SK-N-SH (cell line): ENCODE measurements at regions of chr9 and their contacts with region 1.

Region 1: DNA sequence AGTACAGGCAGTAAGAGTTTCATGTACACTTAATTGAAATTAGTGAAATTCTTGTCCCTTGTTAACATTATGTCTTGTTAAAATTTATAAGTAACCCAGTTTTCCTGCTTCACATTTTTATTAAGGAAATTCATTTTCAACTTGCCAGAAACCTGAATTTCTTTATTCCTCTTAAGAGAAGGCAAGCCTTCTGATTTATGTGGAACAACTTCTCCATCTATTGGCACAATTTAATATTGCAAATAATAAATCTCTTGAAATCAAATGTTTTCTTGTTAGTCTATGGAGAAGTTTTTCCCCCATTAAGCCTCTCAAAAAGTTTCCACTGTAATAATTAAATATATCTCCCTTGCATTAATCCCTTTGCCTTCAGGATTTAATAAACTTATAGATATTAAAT is 33.8 kb upstream of the ACO1 start:
- DNase-seq: no peak
- H3K4me3 ChIP-seq: no peak overlapping the region
- H3K27ac ChIP-seq: no peak overlapping the region
- H3K4me1 ChIP-seq: no peaks in the 10 kb centered on the region
- H3K27me3 ChIP-seq: no peaks in the 10 kb centered on the region
- CTCF ChIP-seq: peak; percentile 62
- EP300 ChIP-seq: no peak
- RAD21 ChIP-seq: peak; percentile 82

Region 2: DNA sequence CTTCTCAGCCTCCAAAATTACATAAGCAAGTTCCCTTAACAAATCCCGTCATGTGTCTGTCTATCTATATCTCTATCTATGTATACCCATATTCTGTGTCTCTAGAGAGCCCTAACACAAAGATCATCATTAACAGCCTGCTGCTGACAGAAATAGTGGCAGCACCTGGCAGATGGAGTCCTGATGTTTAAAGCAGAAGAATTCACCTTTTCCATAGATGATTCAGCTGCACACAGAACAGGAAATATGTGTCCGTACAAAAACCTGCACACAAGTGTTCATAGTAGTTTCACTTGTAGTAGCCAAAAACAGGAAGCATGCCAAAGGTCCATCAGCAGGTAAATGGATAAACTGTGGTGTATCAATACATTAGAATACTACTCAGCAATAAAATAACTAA is 11.3 kb before region 1 on chr9:
- CTCF ChIA-PET with region 1: interaction called, 29 read pairs
- POLR2A ChIA-PET with region 1: no interaction called
- DNase-seq: no peak
- H3K4me3 ChIP-seq: no peak overlapping the region
- H3K27ac ChIP-seq: no peak overlapping the region
- H3K4me1 ChIP-seq: peaks cover 0 to 4% of the 10 kb centered on the region in 2 experiments; a peak in 1 of 4 replicates
- H3K27me3 ChIP-seq: no peaks in the 10 kb centered on the region
- CTCF ChIP-seq: no peak
- EP300 ChIP-seq: no peak
- RAD21 ChIP-seq: no peak

Region 3: GRCh38 chr9:32442433-32442832 is 91.8 kb after region 1 on chr9:
- CTCF ChIA-PET with region 1: no interaction called
- POLR2A ChIA-PET with region 1: no interaction called
- DNase-seq: no peak
- H3K4me3 ChIP-seq: no peak overlapping the region
- H3K27ac ChIP-seq: no peak overlapping the region
- H3K4me1 ChIP-seq: no peaks in the 10 kb centered on the region
- H3K27me3 ChIP-seq: no peaks in the 10 kb centered on the region
- CTCF ChIP-seq: no peak
- EP300 ChIP-seq: no peak
- RAD21 ChIP-seq: no peak

Region 4: DNA sequence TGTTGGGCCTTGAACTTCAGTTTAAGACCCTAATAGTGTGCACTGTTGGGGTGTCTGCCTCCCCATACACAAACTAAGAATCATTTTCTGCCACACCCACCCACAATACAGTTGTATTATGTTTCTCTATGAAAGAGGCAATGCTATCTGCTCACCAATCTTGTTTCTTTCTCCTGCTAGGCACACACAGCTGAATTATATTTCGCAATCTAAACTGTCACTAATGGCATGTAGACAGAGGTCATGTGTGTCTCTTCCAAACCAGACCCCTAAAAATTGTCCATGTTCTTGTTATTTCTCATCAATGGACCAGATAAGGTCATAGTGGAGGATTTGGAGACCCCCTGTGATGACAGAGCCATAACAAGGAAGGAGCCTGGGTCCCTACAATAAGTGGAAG is 118.1 kb after region 1 on chr9:
- CTCF ChIA-PET with region 1: no interaction called
- POLR2A ChIA-PET with region 1: no interaction called
- DNase-seq: no peak
- H3K4me3 ChIP-seq: no peak overlapping the region
- H3K27ac ChIP-seq: no peak overlapping the region
- H3K4me1 ChIP-seq: no peaks in the 10 kb centered on the region
- H3K27me3 ChIP-seq: no peaks in the 10 kb centered on the region
- CTCF ChIP-seq: no peak
- EP300 ChIP-seq: no peak
- RAD21 ChIP-seq: no peak